ENCODE measurements at regions of chr13 and their contacts with region 1.

Region 1: GRCh38 chr13:30132623-30133553 is 174.5 kb downstream of the KATNAL1 start:
- DNase-seq: peak; percentile 98 to 99
- H3K4me3 ChIP-seq: no peak overlapping the region
- H3K27ac ChIP-seq: peak overlapping the region; percentile 68 to 72
- H3K4me1 ChIP-seq: peaks cover 3 to 10% of the 10 kb centered on the region in 2 donors
- H3K27me3 ChIP-seq: no peaks in the 10 kb centered on the region
- CTCF ChIP-seq: peak; percentile 93 to 97 (median 94)
- POLR2A ChIP-seq: peak in 1 of 2 donors; percentile 14

Region 2: GRCh38 chr13:29902101-29902952 is 230.6 kb before region 1 on chr13:
- intact Hi-C with region 1: no loop called
- DNase-seq: peak; percentile 32 to 57
- H3K4me3 ChIP-seq: no peak overlapping the region
- H3K27ac ChIP-seq: peak overlapping the region in 1 of 2 donors; percentile 24
- H3K4me1 ChIP-seq: no peaks in the 10 kb centered on the region
- H3K27me3 ChIP-seq: no peaks in the 10 kb centered on the region
- CTCF ChIP-seq: no peak
- POLR2A ChIP-seq: no peak

Region 3: GRCh38 chr13:30334663-30335386 is 201.9 kb after region 1 on chr13:
- intact Hi-C with region 1: loop called (anchors 2 kb)
- DNase-seq: no peak
- H3K4me3 ChIP-seq: no peak overlapping the region
- H3K27ac ChIP-seq: peak overlapping the region; percentile 53 to 58
- H3K4me1 ChIP-seq: peaks cover 7 to 27% of the 10 kb centered on the region in 2 donors
- H3K27me3 ChIP-seq: no peaks in the 10 kb centered on the region
- CTCF ChIP-seq: peak in 1 of 4 experiments; percentile 17
- POLR2A ChIP-seq: no peak

Region 4: DNA sequence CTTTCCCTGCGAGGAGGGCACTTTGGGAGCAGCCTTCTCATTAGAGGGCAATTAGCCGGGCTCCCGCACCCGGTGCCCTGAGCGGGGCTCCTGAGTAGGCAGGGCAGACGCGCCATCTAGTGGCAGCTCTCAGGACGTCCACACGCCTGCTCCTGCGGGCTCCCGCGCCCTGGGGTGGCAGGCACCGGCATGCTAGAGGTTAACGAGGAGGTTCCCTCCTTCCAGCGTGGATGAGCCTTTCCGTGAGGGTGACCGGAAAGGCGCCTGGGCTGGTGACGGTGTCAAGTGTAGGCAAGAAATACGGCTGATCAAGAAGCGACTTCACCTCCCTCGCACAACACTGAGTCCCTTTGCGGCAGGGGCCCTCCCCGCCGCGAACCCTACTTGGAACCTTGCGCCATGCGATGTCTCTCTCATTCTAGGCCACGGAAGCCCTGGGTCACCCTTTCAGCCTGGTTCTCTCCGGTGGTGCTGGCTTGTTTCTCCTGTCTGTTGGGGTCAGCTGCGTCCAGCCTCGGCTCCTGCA is 670.1 kb after region 1 on chr13:
- intact Hi-C with region 1: loop called (anchors 5 kb)
- DNase-seq: peak; percentile 83 to 90
- H3K4me3 ChIP-seq: peak overlapping the region; percentile 34 to 37
- H3K27ac ChIP-seq: peak overlapping the region; percentile 22 to 28
- H3K4me1 ChIP-seq: no peaks in the 10 kb centered on the region
- H3K27me3 ChIP-seq: no peaks in the 10 kb centered on the region
- CTCF ChIP-seq: peak; percentile 90 to 94 (median 92)
- POLR2A ChIP-seq: peak in 1 of 2 donors; percentile 35